Activated CD8-positive, alpha-beta T cell treated with anti-CD3 and anti-CD28 coated beads for 36 hours (primary cell): ENCODE measurements at regions of chr6 and their contacts with region 1.

Region 1: DNA sequence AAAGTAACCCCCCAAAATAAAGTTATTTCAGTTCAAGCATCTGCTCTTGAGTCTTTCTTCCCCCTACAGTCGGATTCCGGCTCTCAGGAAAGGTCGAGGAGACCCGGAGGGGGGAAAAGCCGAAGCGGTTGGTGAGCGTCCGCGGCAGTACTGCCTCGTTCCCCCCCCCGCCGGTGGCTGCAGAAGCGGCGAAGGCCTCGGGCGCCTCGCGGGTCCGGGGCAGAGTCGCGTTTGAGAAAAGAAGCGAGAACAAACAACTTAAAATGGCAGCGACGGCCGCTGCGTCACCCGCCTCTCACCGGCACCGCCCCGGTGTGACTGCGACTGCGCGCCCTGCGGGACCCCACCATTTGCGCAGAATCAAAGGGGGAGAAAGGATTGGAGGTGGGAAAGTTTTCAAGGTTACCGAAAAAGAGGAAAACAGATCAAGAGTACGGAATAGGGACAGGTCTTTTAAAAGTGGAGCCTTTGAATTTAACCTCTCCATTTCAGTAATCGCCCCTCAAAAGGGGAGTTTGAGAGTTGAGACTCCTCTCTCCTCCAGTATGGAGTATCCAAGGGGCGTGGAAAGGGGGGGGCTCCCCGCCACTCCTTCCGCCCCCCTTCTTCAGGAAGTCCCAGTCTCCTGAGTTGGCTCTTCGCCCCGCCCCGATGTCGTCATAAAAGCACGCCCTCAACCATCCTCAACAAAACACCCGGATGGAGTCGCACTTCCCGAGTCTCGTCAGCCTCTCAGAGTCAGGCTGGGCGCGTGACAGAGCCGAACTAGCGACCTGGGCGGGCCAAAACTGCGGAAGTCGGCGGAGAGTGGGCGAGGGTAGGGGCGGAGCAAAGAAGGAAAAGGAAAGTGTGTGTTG is 1.9 kb upstream of the C6orf62 start:
- DNase-seq: peak; percentile 100
- ATAC-seq: peak; percentile 86
- H3K4me3 Mint-ChIP-seq: peak overlapping the region; percentile 98
- H3K27ac Mint-ChIP-seq: peak overlapping the region; percentile 94
- H3K4me1 Mint-ChIP-seq: peaks cover 28% of the 10 kb centered on the region
- H3K27me3 Mint-ChIP-seq: no peaks in the 10 kb centered on the region
- CTCF ChIP-seq: no peak

Region 2: DNA sequence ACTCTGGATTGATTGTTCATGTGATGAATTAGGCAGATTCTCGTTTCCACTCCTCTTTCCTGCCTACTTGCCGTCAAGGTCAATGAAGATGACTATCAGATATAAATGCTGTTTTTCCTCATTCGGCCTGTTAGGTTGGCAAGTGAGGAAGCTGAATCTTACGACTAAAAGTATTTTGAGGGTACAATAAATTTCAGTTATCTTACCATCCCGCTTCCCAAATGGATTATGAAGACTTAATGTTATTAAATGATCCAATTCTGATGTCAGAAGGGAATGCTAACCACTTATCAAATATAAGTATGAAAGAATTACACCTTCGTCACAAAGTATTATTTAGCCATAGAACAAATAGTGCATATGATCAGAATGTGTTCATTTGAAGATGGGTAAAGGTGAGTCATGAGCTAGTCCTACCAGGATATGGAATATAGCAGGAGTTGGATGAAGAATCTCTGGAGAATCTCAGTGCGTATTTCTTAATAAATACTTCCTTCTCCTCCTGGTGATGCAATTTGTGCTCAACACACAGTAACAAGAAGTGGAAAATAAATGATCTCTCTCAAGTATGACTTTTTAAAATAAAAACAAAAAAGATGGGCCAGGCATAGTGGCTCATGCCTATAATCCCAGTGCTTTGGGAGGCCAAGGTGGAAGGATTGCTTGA is 236.0 kb before region 1 on chr6:
- CTCF ChIA-PET with region 1: no interaction called
- POLR2A ChIA-PET with region 1: no interaction called
- intact Hi-C with region 1: no loop called
- DNase-seq: no peak
- ATAC-seq: no peak
- H3K4me3 Mint-ChIP-seq: no peak overlapping the region
- H3K27ac Mint-ChIP-seq: no peak overlapping the region
- H3K4me1 Mint-ChIP-seq: no peaks in the 10 kb centered on the region
- H3K27me3 Mint-ChIP-seq: no peaks in the 10 kb centered on the region
- CTCF ChIP-seq: no peak

Region 3: DNA sequence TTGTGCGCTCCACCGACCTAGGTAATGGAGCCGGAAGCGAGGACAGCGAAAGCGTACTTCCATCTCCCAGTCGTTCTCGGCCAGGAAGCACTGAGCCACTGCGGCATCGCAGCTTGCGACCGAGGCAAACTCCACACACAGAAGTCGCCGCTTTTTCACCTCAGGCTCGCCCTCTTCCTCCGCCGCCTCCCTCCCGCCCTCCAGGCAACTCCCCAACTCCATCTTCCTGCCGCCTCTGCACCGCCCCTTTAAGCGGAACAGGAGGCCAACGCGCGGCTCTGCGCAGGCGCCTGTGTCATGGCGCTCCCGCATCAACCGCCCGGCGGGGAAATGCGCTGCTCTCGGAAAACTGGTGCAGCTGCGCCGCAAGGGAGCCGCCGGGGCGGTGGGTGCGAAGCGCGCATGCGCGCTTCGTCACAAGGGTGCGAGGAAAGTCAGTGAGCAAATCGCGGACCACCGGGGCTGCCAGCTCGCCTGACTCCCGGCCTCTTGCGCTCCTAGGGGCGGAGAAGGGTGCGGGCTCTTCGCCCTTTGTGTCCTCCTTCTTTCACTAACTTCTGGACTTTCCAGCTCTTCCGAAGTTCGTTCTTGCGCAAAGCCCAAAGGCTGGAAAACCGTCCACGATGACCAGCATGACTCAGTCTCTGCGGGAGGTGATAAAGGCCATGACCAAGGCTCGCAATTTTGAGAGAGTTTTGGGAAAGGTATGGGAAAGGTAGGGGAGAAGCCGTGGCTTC is 54.0 kb before region 1 on chr6 and contains the starts of genes ACOT13 and TDP2:
- CTCF ChIA-PET with region 1: interaction called, 7 read pairs
- POLR2A ChIA-PET with region 1: interaction called, 10 read pairs
- intact Hi-C with region 1: no loop called
- DNase-seq: peak; percentile 96
- ATAC-seq: peak; percentile 95
- H3K4me3 Mint-ChIP-seq: peak within 1 kb of the TSS; percentile 91
- H3K27ac Mint-ChIP-seq: peak within 1 kb of the TSS; percentile 99
- H3K4me1 Mint-ChIP-seq: peaks cover 33% of the 10 kb centered on the region
- H3K27me3 Mint-ChIP-seq: no peaks in the 10 kb centered on the region
- CTCF ChIP-seq: peak; percentile 70
- total RNA-seq, gene ACOT13: 28.9 to 33.6 TPM
- total RNA-seq, gene TDP2: 37.4 to 39.8 TPM

Region 4: DNA sequence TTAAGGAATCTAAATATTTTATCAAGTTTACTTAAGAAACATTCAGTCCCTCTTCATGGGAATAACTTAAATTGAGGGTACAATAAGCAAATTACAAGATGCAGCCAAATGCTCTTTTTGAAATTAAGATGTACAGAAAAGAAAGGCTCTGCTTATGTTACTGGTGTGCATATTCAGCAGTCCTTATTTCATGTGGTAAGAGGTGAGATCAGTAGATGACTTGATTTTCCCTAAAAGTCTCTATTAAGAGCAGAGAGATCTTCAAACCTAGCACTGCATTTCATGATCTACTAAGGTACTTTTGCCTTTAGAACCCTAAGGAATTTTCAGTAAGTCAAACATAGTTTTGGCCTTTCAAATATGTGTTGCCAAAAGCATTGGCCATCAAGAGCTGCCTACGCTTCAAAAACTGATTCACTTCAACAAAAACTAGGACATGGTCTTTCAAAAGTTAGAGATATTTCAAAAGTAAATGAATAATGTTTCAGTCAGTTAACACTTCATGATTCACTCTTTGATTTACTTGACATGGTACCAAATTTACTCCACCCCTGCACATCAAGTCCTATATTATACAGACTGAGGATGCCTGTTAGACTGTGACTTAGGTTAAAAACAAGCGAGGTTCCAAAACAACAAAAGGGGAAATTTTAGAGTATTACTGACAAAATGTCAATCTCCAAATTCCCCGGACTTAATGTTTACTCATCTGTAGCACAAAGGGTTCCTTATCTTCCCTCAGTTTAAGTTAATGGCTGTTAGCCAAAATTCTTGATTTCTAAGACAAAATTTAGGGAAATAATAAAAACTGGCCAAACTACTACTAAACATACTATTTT is 21.1 kb before region 1 on chr6:
- CTCF ChIA-PET with region 1: no interaction called
- POLR2A ChIA-PET with region 1: interaction called, 12 read pairs
- intact Hi-C with region 1: no loop called
- DNase-seq: no peak
- ATAC-seq: peak; percentile 40
- H3K4me3 Mint-ChIP-seq: no peak overlapping the region
- H3K27ac Mint-ChIP-seq: peak overlapping the region; percentile 74
- H3K4me1 Mint-ChIP-seq: peaks cover 55% of the 10 kb centered on the region
- H3K27me3 Mint-ChIP-seq: no peaks in the 10 kb centered on the region
- CTCF ChIP-seq: no peak

Region 5: DNA sequence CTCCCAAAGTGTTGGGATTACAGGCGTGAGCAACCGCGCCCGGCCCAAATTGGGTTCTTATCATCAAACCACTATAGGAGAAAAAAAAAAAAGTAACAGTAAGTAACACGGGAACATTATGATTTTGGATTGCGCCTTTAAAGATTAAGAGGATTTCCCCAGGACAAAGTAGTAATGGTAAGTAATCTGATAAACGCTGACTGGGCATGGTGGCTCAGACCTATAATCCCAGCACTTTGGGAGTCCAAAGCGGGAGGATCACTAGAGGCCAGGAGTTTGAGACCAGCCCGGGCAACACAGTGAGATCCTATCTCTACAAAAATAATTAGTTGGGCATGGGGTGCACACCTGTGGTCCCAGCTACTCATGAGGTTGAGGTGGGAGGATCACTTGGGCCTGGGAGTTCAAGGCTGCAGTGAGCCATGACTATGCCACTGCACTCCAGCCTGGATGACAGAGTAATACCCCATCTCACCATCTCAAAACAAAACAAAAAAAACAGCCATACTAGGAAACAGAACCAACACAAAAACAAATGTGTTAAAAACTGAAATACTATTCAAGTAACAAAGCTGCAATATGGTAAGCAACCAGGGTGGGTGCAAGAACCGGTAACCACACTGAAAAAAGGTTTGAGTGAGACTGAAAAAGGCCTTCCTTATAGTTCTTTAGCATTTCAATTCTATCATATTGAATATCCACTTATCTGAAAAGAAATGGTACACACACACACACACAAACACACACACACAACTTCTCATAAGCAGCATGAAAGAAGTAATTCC is 10.1 kb before region 1 on chr6:
- CTCF ChIA-PET with region 1: interaction called, 6 read pairs
- POLR2A ChIA-PET with region 1: interaction called, 22 read pairs
- intact Hi-C with region 1: no loop called
- DNase-seq: no peak
- ATAC-seq: no peak
- H3K4me3 Mint-ChIP-seq: no peak overlapping the region
- H3K27ac Mint-ChIP-seq: peak overlapping the region; percentile 74
- H3K4me1 Mint-ChIP-seq: peaks cover 50% of the 10 kb centered on the region
- H3K27me3 Mint-ChIP-seq: no peaks in the 10 kb centered on the region
- CTCF ChIP-seq: no peak

Region 6: GRCh38 chr6:24743265-24743943 is 22.6 kb after region 1 on chr6:
- CTCF ChIA-PET with region 1: interaction called, 8 read pairs
- POLR2A ChIA-PET with region 1: interaction called, 8 read pairs
- intact Hi-C with region 1: loop called (anchors 1 kb)
- DNase-seq: peak; percentile 52
- ATAC-seq: peak; percentile 91
- H3K4me3 Mint-ChIP-seq: peak overlapping the region; percentile 11
- H3K27ac Mint-ChIP-seq: peak overlapping the region; percentile 84
- H3K4me1 Mint-ChIP-seq: peaks cover 21% of the 10 kb centered on the region
- H3K27me3 Mint-ChIP-seq: no peaks in the 10 kb centered on the region
- CTCF ChIP-seq: no peak

Region 7: DNA sequence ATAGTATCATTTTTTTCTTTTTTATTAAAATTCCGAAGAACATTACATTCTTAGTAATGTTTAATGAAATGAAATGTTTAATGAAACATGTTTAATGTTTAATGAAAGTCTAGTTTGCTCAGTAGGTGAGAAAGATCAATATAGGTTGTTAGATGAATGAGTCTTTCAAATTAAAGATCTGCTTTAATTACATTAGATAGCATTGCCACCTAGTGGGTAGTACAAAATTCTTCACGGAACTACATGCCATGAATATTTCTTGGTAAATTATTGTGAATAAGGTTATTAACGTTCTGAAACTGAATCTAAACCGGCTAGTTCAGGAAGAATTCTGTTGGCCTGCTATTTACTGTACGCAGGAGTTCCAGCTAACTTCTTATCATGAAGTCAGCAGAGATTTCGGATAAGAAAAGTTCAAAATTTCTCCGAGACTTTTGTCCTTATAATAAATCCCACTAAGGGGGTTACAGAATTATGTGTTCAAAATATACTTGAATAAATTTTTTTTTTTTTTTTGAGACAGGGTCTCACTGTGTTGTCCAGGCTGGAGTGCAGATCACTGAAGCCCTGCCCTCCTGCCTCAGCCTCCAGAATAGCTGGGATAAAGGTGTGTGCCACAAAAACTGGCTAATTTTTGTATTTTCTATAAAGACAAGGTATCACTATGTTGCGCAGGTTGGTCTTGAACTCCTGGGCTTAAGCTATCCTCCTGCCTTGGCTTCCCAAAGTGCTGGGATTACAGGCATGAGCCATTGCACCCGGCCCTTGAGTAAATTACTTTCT is 46.0 kb after region 1 on chr6:
- CTCF ChIA-PET with region 1: interaction called, 6 read pairs
- POLR2A ChIA-PET with region 1: interaction called, 3 read pairs
- intact Hi-C with region 1: loop called (anchors 5 kb)
- DNase-seq: no peak
- ATAC-seq: peak; percentile 76
- H3K4me3 Mint-ChIP-seq: no peak overlapping the region
- H3K27ac Mint-ChIP-seq: no peak overlapping the region
- H3K4me1 Mint-ChIP-seq: peaks cover 4% of the 10 kb centered on the region
- H3K27me3 Mint-ChIP-seq: no peaks in the 10 kb centered on the region
- CTCF ChIP-seq: peak; percentile 58

Region 8: GRCh38 chr6:24774696-24775519 is 54.1 kb after region 1 on chr6 and contains the start of gene GMNN:
- CTCF ChIA-PET with region 1: interaction called, 6 read pairs
- POLR2A ChIA-PET with region 1: interaction called, 12 read pairs
- intact Hi-C with region 1: no loop called
- DNase-seq: peak; percentile 99
- ATAC-seq: peak; percentile 93
- H3K4me3 Mint-ChIP-seq: peak within 1 kb of the TSS; percentile 98
- H3K27ac Mint-ChIP-seq: peak within 1 kb of the TSS; percentile 100
- H3K4me1 Mint-ChIP-seq: peaks cover 23% of the 10 kb centered on the region
- H3K27me3 Mint-ChIP-seq: no peaks in the 10 kb centered on the region
- CTCF ChIP-seq: no peak
- total RNA-seq, gene GMNN: 69.2 to 72.6 TPM